ENCODE measurements at regions of chr19 and their contacts with region 1.

Region 1: DNA sequence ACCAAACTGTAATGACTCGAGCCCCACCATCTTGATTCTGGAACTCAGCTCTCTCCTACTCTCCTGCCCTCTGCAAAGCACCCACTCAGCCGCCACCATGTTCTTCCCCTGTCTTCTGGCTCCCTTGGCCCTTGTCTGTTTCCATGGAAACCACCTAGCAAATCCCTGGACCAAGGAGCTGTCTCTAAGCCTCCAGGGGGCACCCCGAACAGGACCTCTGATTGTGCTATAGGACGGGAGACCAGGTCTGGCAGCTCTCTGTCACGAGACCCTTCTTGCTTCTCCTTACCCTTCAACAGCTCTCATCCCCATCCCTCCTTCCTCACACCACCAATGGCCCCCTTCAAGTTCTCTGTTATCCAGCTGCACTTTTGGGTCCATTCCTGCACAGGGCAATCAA is 277.7 kb upstream of the ZNF507 start:
- DNase-seq: no peak
- ATAC-seq: no peak
- H3K4me3 Mint-ChIP-seq: no peak overlapping the region
- H3K27ac Mint-ChIP-seq: no peak overlapping the region
- H3K4me1 Mint-ChIP-seq: no peaks in the 10 kb centered on the region
- H3K27me3 Mint-ChIP-seq: no peaks in the 10 kb centered on the region

Region 2: DNA sequence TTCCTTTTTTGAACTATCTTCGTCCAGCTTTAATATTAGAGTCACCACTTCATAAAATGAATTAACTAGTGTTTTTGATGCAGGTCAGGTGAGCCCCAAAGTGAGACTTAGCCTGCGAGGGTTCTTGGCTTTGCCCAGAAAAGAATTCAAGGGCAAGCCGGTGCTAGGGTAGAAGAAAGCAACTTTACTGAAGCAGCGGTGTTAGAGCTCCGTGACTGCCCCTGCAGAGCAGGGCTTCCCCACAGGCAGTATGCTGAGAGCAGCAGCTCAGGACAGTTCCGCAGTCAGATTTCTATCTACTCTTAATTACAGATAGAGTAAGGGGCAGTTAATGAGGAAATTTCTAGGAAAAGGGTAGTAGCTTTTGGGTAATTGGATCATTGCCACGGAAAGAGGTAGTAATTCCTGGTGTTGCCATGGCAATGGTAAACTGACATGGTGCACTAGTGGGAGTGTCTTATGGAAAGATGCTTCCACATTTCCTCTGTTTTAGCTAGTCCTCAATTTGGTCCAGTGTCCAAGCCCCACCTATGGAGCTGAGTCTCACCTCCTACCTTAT is 154.5 kb before region 1 on chr19:
- CTCF ChIA-PET with region 1: no interaction called
- POLR2A ChIA-PET with region 1: interaction called, 10 read pairs
- intact Hi-C with region 1: no loop called
- DNase-seq: no peak
- ATAC-seq: no peak
- H3K4me3 Mint-ChIP-seq: no peak overlapping the region
- H3K27ac Mint-ChIP-seq: no peak overlapping the region
- H3K4me1 Mint-ChIP-seq: no peaks in the 10 kb centered on the region
- H3K27me3 Mint-ChIP-seq: no peaks in the 10 kb centered on the region

Region 3: GRCh38 chr19:32091241-32091640 is 23.6 kb after region 1 on chr19:
- CTCF ChIA-PET with region 1: no interaction called
- POLR2A ChIA-PET with region 1: no interaction called
- intact Hi-C with region 1: no loop called
- DNase-seq: no peak
- ATAC-seq: no peak
- H3K4me3 Mint-ChIP-seq: no peak overlapping the region
- H3K27ac Mint-ChIP-seq: no peak overlapping the region
- H3K4me1 Mint-ChIP-seq: no peaks in the 10 kb centered on the region
- H3K27me3 Mint-ChIP-seq: no peaks in the 10 kb centered on the region

Region 4: GRCh38 chr19:32238076-32238475 is 170.4 kb after region 1 on chr19:
- CTCF ChIA-PET with region 1: no interaction called
- POLR2A ChIA-PET with region 1: no interaction called
- intact Hi-C with region 1: no loop called
- DNase-seq: no peak
- ATAC-seq: no peak
- H3K4me3 Mint-ChIP-seq: no peak overlapping the region
- H3K27ac Mint-ChIP-seq: no peak overlapping the region
- H3K4me1 Mint-ChIP-seq: no peaks in the 10 kb centered on the region
- H3K27me3 Mint-ChIP-seq: peaks cover 1% of the 10 kb centered on the region